SK-N-SH (cell line): ENCODE measurements at regions of chr7 and their contacts with region 1.

Region 1: DNA sequence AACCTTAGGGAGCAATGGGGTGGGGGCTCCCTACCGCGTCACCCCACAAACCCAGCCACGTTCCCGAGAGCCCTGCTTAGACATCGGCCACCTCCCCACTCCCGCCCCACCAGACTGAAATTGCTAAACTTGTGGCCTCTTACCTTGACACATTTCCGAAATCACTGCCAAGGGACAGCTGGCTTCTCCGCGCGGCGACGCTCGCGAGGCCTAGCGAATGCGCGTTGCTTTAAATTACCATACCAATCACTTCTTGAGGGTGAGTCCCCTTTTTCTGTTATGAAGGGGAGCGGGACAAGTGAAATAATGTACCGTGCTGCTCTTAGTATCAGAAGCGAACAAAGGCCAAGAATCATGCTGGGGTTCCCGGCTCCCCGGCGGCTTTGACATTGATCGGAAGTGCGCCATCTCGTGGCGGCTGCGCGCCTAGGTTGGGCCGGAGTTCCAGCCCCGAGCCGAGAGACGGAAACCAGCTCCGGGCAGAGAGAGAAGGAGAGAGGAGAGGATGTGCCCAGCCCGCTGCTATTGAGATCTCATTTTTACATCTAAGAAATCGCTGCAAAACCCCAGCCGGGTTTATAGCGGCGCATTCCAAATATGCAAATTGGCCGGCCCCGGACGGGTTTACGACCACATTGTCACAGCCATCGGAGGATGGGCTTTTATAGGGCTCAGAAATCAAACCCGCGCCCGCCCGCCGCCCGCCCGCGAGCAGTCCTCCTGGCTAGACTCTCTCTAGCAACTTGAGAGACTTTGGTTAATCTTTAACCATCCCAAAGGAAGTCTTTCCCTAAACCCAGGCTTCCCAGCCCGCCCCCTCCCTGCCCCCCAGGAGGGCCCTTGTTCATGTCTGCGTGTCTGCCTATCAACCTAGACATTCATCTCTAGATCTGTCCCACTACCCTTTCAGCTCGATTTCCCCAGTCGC is 5.3 kb downstream of the HOXA11 start:
- DNase-seq: peak; percentile 93
- H3K4me3 ChIP-seq: peak overlapping the region; percentile 5 to 36; a peak in 2 of 4 replicates
- H3K27ac ChIP-seq: no peak overlapping the region
- H3K4me1 ChIP-seq: peaks cover 4 to 10% of the 10 kb centered on the region in 2 experiments; a peak in 1 of 4 replicates
- H3K27me3 ChIP-seq: peaks cover 97% of the 10 kb centered on the region
- CTCF ChIP-seq: peak; percentile 100
- EP300 ChIP-seq: no peak
- RAD21 ChIP-seq: no peak

Region 2: DNA sequence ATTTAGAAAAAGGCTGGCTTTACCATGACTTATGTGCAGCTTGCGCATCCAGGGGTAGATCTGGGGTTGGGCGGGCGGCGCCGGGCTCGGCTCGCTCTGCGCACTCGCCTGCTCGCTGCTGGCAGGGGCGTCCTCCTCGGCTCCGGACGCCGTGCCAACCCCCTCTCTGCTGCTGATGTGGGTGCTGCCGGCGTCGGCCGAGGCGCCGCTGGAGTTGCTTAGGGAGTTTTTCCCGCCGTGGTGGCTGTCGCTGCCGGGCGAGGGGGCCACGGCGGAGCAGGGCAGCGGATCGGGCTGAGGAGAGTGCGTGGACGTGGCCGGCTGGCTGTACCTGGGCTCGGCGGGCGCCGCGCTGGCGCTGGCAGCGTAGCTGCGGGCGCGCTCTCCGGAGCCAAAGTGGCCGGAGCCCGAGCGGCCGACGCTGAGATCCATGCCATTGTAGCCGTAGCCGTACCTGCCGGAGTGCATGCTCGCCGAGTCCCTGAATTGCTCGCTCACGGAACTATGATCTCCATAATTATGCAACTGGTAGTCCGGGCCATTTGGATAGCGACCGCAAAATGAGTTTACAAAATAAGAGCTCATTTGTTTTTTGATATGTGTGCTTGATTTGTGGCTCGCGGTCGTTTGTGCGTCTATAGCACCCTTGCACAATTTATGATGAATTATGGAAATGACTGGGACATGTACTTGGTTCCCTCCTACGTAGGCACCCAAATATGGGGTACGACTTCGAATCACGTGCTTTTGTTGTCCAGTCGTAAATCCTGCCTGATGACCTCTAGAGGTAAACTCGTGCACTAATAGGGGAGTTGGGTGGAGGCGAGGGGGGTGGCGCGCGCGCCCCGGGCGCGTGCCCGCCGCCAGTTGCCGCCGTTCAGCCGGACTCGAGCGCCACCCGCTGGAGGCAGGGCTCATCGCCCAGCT is 36.5 kb before region 1 on chr7 and contains the start of gene HOXA5:
- CTCF ChIA-PET with region 1: interaction called, 29 read pairs
- POLR2A ChIA-PET with region 1: no interaction called
- DNase-seq: peak; percentile 92
- H3K4me3 ChIP-seq: peak within 1 kb of the TSS; percentile 17 to 31; a peak in 2 of 4 replicates
- H3K27ac ChIP-seq: no peak within 1 kb of the TSS
- H3K4me1 ChIP-seq: peaks cover 11 to 12% of the 10 kb centered on the region in 2 experiments; a peak in 1 of 4 replicates
- H3K27me3 ChIP-seq: peaks cover 100% of the 10 kb centered on the region
- CTCF ChIP-seq: peak; percentile 85
- EP300 ChIP-seq: no peak
- RAD21 ChIP-seq: peak; percentile 63
- polyA plus RNA-seq, gene HOXA5: not detected in 2 replicates

Region 3: GRCh38 chr7:27150568-27151340 is 29.0 kb before region 1 on chr7:
- CTCF ChIA-PET with region 1: interaction called, 58 read pairs
- POLR2A ChIA-PET with region 1: no interaction called
- DNase-seq: peak; percentile 96
- H3K4me3 ChIP-seq: peak overlapping the region; percentile 32 to 63
- H3K27ac ChIP-seq: no peak overlapping the region
- H3K4me1 ChIP-seq: peaks cover 0 to 9% of the 10 kb centered on the region in 2 experiments; a peak in 1 of 4 replicates
- H3K27me3 ChIP-seq: peaks cover 100% of the 10 kb centered on the region
- CTCF ChIP-seq: peak; percentile 91
- EP300 ChIP-seq: peak in 1 of 2 experiments; percentile 40; a peak in 1 of 4 replicates
- RAD21 ChIP-seq: peak; percentile 51

Region 4: DNA sequence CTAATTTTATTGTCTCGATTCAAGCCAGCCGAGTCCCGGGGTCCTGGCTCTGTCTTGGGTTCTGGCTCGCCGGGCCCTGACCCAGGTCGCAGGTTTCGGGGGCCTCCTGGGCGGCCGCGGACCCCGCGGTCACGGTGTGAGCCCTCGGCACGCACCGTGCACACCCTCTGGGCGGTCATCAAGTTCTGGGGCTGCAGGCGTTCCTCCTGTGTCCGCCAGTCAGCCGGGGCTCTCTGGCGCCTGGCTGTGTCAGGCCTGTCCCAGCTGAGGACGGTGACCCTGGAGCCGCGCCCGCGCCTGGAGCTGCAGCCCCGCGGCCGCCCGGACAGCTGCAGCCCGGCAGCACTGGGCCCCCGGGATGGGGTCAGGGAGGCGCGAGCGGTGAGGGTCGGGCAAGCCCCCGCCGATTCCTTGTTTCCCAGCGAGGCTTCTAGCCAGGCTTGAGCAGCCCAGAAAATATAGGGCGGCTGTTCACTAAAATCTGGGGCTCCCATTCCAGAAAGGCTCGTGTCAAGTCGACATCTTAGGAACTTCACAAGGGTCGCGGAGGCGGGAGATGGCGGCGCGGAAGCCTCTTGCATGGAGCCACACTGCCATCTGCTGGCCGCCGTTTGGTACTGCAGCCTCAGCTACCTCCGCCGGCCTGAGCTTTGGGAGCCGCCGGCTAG is 19.1 kb before region 1 on chr7:
- CTCF ChIA-PET with region 1: interaction called, 205 read pairs
- POLR2A ChIA-PET with region 1: no interaction called
- DNase-seq: peak; percentile 96
- H3K4me3 ChIP-seq: peak overlapping the region; percentile 39 to 70
- H3K27ac ChIP-seq: no peak overlapping the region
- H3K4me1 ChIP-seq: peaks cover 0 to 8% of the 10 kb centered on the region in 2 experiments; a peak in 1 of 4 replicates
- H3K27me3 ChIP-seq: peaks cover 91% of the 10 kb centered on the region
- CTCF ChIP-seq: peak; percentile 99
- EP300 ChIP-seq: no peak
- RAD21 ChIP-seq: peak; percentile 94

Region 5: GRCh38 chr7:27204851-27205337 is 25.1 kb after region 1 on chr7:
- CTCF ChIA-PET with region 1: interaction called, 23 read pairs
- POLR2A ChIA-PET with region 1: no interaction called
- DNase-seq: no peak
- H3K4me3 ChIP-seq: no peak overlapping the region; a peak in 1 of 4 replicates
- H3K27ac ChIP-seq: no peak overlapping the region
- H3K4me1 ChIP-seq: peaks cover 0 to 7% of the 10 kb centered on the region in 2 experiments; a peak in 1 of 4 replicates
- H3K27me3 ChIP-seq: peaks cover 95% of the 10 kb centered on the region
- CTCF ChIP-seq: no peak
- EP300 ChIP-seq: no peak
- RAD21 ChIP-seq: no peak

Region 6: DNA sequence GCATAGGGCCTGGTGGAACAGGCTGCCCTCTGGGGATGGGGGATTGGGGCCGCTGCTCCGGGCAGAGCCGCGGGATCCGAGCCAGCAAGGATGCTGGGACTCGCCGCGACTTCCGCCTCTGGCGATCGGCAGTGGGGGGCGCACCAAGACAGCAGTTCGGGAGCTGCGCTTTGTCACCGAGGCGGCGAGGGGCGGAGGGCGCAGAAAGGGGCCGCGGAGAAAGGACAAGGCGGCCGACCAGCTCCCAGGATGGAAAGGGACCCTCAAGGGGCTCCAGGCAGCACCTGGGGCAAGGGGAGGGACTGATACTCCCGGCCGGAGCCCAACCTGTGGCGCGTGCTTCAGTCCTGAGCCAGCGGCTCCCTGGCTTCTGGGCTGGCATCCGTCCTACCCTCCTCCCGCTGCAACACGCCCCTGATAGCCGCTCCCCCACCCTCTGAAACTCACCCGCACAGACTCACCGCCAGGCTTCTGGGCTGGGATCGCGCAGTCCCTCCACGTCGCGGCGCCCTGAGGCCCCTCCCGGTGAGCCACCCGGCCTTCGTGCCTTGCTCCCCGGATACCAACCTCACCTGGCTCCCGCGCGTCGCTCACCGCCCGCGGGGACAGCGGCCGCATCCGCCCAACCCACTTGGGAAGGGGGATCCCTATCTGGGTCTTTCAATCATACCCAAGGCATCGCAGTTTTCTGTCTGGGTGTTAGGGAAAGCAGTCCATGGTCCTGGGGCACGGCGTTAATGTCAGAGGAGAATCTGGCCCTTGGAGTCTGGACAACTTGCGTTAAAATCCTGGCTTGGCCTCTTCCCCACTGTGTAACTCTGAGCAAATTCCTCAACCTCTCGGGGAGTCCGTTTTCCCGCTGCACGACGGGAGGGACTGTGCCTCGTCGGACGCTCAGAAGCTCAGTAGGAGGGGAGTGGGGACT is 55.9 kb after region 1 on chr7:
- CTCF ChIA-PET with region 1: interaction called, 13 read pairs
- POLR2A ChIA-PET with region 1: no interaction called
- DNase-seq: peak; percentile 85
- H3K4me3 ChIP-seq: peak overlapping the region; percentile 41 to 61
- H3K27ac ChIP-seq: no peak overlapping the region
- H3K4me1 ChIP-seq: peaks cover 4 to 13% of the 10 kb centered on the region in 2 experiments; a peak in 1 of 4 replicates
- H3K27me3 ChIP-seq: peaks cover 78% of the 10 kb centered on the region
- CTCF ChIP-seq: peak; percentile 44
- EP300 ChIP-seq: no peak
- RAD21 ChIP-seq: peak; percentile 63